ENCODE measurements at regions of chr17 and their contacts with region 1.

Region 1: DNA sequence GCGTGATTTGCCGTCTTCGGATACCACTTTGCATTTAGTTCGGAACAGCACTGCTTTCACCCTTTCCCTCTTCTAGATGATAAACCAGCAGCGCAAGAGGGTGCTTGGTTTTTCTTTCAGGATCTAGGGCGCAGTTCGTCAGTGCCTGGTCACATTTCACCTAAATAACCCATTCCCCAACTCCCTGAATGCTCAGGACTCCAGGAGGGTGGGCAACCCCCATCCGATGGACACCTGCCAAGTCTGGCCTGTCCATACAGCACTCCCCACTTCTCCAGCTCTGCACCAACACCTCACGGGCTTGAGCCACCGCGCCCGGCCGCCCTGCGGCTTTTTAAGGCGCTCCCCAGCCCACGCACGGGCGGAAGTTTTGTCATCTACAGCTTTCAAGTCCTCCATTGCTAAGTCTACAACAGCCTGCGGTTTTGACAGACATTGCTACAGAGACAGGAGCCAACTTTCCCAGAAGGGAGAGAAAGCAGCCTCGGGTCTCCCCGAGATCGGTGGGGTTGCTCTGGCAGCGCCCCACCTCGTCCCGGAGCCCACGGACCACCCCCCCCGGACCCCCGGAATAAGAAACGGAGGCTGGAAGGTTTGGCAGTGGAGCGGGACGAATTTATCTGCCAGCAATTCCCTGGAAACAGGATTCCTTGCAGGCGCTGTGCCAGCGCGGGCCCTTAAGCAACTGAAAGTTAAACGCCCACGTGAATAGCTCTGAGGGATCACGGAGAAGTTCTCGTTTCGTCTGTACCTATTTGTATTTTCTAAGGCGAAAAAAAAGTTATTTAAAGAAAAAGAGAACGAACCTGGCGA is 38.6 kb upstream of the SLFN13 start:
- DNase-seq: peak; percentile 43 to 52
- ATAC-seq: peak; percentile 75 to 84 (median 78)
- H3K4me3 ChIP-seq: peak overlapping the region; percentile 33 to 66 (median 58)
- H3K27ac ChIP-seq: peak overlapping the region in 8 of 10 donors; percentile 20 to 80 (median 50)
- H3K4me1 ChIP-seq: peaks cover 0 to 29% (median 12%) of the 10 kb centered on the region in 9 donors
- H3K27me3 ChIP-seq: peaks cover 5 to 78% (median 56%) of the 10 kb centered on the region in 7 donors
- CTCF ChIP-seq: no peak

Region 2: DNA sequence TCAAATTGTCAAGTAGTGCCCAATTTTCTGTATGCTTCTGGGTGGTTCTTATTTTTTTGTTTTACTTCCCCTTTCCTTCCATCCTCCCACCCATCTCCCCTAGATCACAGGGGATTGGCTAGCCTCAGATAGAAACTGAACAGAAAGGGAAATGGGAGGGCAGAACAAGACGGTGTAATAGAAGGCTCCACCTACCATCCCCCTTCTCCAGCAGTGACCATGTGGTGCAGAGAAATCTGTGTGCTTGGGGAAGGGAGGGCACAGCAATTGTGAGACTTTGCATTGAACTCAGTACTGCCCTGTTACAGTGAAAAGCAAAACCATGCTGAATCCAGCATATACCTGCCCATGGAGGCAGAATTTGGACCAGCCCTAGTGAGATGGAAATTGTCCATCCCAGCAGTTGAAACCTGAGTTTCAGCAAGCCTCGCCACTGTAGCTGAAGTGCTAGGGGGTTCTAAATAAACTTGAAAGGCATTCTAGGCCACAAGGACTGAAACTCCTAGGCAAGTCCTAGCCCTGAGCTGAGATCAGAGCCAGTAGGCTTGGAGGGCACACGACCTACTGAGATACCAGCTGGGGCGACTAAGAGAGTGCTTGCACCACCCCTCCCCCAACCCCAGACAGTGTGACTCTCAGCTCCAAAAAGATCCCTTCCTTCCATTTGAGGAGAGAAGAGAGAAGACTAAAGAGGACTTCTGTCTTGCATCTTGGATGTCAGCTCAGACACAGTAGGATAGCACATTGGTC is 118.9 kb before region 1 on chr17:
- intact Hi-C with region 1: loop called in 1 of 10 experiments (anchors 10 kb)
- DNase-seq: peak in 1 of 2 donors; percentile 26
- ATAC-seq: peak in 7 of 8 donors; percentile 79 to 94 (median 87)
- H3K4me3 ChIP-seq: no peak overlapping the region
- H3K27ac ChIP-seq: peak overlapping the region in 1 of 10 donors; percentile 57
- H3K4me1 ChIP-seq: peaks cover 0 to 55% (median 10%) of the 10 kb centered on the region in 9 donors
- H3K27me3 ChIP-seq: peaks cover 0 to 4% (median 0%) of the 10 kb centered on the region in 7 donors
- CTCF ChIP-seq: no peak

Region 3: GRCh38 chr17:35432176-35433074 is 54.7 kb before region 1 on chr17 and contains the start of gene SLFN12:
- intact Hi-C with region 1: loop called in 1 of 10 experiments (anchors 10 kb)
- DNase-seq: peak in 1 of 2 donors; percentile 79
- ATAC-seq: peak; percentile 87 to 96 (median 92)
- H3K4me3 ChIP-seq: peak within 1 kb of the TSS; percentile 50 to 73 (median 64)
- H3K27ac ChIP-seq: peak within 1 kb of the TSS; percentile 83 to 95 (median 92)
- H3K4me1 ChIP-seq: peaks cover 0 to 52% (median 27%) of the 10 kb centered on the region in 9 donors
- H3K27me3 ChIP-seq: peaks cover 0 to 2% (median 0%) of the 10 kb centered on the region in 7 donors
- CTCF ChIP-seq: no peak
- total RNA-seq, gene SLFN12: 2.0 to 7.8 (median 4.0) TPM

Region 4: DNA sequence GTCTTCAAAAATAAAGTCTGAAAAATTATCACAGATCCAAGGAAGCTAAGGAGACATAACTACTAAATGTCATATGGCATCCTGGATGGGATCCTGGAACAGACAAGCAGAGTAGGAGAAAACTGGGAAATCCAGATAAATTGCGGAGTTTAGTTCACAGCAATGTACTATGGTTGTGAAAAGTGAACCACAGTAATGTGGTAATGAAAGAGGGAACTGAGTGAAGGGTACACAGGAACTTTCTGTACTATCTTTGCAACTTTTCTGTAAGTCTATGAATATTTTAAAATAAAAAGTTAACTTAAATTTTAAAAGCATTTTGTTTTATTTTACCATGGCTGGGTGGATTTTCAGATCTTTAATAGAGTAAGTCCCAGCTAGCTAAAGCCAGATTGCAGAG is 34.0 kb after region 1 on chr17:
- intact Hi-C with region 1: loop called in 1 of 10 experiments (anchors 1 kb)
- DNase-seq: no peak
- ATAC-seq: no peak
- H3K4me3 ChIP-seq: peak overlapping the region in 1 of 10 donors; percentile 16
- H3K27ac ChIP-seq: peak overlapping the region in 1 of 10 donors; percentile 52
- H3K4me1 ChIP-seq: peaks cover 0 to 39% (median 0%) of the 10 kb centered on the region in 9 donors
- H3K27me3 ChIP-seq: peaks cover 0 to 16% (median 6%) of the 10 kb centered on the region in 7 donors
- CTCF ChIP-seq: no peak

Region 5: DNA sequence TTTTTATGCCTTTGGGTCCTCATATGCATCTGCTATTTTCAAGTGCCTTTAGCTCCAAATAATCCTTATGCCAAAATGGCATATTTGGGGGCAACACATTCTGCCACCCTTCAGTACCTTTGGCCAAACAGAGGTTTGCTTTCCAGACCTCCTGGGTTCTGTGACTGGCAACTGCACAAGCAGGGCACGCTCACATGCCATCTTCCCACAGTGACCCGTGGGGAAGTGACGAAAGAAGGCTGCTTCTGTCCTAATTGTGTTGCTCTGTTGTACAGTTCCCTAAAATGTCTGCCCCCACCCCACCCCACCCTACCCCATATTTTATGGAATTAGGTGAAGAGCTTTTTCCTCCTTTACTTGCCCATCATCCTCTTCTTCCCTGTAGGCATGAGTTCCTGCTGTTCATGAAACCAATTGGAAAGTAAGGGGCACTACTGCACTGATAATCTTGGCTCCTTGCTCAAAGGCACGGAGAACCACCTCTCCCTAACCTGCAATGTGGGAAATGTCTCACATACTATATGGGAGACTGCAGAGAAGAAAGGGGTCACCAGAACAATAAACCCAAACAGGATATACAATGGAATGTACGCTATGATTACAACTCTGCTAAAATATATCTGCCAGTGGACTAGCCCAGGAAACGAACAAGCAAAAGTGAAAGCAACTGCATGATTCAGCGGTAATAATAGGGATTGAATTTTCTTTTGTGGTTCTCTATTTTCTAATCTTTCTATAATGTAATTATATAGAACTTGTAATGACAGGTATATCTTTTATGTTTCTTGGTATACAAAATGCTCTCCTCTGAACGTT is 53.7 kb after region 1 on chr17:
- intact Hi-C with region 1: no loop called
- DNase-seq: peak in 1 of 2 donors; percentile 35
- ATAC-seq: peak in 7 of 8 donors; percentile 39 to 70 (median 57)
- H3K4me3 ChIP-seq: peak overlapping the region in 9 of 10 donors; percentile 10 to 46 (median 42)
- H3K27ac ChIP-seq: peak overlapping the region; percentile 4 to 88 (median 71)
- H3K4me1 ChIP-seq: peaks cover 3 to 68% (median 39%) of the 10 kb centered on the region in 9 donors
- H3K27me3 ChIP-seq: no peaks in the 10 kb centered on the region
- CTCF ChIP-seq: no peak